Activated CD8-positive, alpha-beta memory T cell treated with anti-CD3 and anti-CD28 coated beads, Interleukin-2, amount 10 ng/mL, durations not matched to agents 7 days and 5 days (primary cell): ENCODE measurements at regions of chr2 and their contacts with region 1.

Region 1: DNA sequence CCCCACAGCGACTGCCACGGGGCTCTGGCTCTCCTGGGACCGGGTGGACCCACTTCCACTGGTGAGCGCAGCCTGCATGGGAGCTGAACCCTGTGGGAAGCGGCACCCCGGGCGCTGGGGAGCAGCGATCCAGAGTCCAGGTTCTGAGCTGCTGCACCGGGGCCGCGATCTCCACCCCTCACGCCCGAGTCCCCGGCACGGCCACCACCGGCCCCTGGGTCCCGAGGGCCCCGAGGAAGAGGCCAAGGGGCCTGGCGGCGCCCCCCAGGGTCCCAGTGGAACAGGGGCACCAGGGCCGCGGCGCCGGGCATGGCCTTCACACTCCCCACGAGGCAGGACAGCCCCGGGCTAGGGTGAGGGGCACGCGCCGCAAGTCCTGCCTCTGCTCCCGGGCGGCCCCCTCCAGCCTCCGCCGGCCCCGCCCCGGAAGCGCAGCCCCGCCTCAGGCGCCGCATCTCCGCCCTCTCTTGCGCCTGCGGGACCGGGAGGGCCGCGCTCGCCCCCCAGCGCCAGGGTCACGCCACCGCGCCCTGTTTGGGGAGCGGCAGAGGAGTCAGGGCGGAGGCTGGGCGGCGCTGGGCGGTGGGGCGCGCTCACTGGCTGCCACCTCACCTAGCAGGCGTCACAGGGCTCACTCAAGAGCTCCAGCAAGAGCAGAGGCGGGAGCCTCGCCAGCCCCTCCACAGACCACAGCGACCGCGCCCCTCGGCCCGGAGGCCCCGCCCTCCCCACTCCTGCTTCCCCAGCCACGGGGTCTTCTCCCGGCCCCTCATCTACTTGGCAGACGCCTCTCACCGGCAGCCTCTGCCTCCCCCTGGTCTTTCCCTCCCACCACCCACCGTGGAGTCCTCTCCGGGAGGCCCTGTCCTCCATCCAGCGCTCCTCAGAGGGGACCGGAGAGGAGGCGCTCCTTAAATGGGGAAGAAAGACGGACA is 26.8 kb downstream of the THAP4 start:
- DNase-seq: peak; percentile 94
- ATAC-seq: peak; percentile 99
- H3K4me3 Mint-ChIP-seq: peak overlapping the region; percentile 45
- H3K27ac Mint-ChIP-seq: peak overlapping the region; percentile 69
- H3K4me1 Mint-ChIP-seq: peaks cover 24% of the 10 kb centered on the region
- H3K27me3 Mint-ChIP-seq: no peaks in the 10 kb centered on the region

Region 2: DNA sequence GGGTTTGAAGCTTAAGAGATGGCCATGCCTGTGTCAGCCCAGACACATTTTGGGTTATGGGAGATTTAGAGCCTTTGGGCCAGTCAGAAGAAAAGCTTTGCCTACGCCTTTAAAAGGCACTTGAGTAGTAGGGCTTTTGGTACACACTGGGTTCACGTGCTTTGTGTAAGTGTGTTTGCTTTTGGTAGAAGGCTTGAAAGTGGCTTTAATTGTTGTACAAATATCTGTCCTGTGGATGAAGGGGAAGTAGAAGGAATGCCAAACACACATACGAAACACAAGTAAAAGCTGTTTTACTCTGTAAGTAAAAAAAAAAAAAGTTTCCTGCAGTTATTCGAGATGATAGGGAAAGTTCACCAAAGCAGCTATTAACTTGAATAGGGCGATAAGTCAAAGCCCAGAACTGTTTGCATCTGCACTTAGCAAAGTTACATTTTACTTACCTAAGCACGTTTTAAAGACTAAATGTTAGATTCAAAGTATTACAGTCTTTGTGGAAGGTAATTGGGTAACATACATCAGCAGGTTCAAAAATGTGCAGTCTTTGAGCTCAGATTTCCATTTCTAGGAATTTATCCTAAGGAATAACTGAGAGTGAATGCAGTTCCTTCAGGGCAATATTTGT is 177.2 kb before region 1 on chr2:
- CTCF ChIA-PET with region 1: no interaction called
- DNase-seq: no peak
- ATAC-seq: no peak
- H3K4me3 Mint-ChIP-seq: no peak overlapping the region
- H3K27ac Mint-ChIP-seq: no peak overlapping the region
- H3K4me1 Mint-ChIP-seq: no peaks in the 10 kb centered on the region
- H3K27me3 Mint-ChIP-seq: no peaks in the 10 kb centered on the region

Region 3: DNA sequence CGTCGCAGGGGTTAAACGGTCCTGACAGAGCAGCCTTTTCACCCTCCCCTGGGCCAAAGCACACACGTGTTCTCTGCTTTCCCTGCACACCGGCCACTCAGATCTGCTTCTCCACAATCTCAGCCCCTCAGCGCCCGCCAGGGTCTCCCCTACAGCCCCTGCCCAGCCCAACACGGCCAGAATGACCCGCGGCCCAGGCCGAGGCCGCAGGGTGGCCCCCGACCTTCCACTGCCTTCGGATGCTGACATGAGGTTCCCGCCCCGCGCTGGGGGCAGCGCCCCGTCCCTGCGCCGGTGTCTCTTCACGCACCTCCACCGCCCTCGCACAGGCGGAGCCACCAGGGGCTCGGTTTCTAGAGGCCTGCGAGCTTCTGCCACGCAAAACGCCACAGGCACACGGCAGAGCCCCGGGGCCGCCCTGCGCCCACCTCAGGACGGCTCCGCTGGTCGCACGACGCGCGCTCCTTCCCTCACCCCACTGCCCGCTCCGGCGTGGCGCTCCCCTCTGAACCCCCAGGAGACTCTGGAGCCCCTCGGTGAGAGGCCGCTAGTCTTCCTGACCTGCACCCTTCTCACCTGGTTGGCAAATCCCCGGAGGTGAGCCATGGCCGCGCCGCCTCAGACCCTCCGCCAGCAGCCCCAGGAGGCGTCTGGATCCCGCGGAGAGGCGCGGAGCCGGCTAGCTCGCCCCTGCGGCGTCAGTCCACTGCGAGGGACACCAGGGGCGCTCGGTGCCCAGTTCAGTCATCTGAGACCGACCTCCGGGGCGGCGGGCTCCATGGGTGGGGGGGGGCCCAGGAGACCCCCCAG is 102.5 kb before region 1 on chr2:
- CTCF ChIA-PET with region 1: no interaction called
- DNase-seq: peak; percentile 60
- ATAC-seq: peak; percentile 26
- H3K4me3 Mint-ChIP-seq: peak overlapping the region; percentile 78
- H3K27ac Mint-ChIP-seq: peak overlapping the region; percentile 52
- H3K4me1 Mint-ChIP-seq: peaks cover 18% of the 10 kb centered on the region
- H3K27me3 Mint-ChIP-seq: peaks cover 10% of the 10 kb centered on the region

Region 4: DNA sequence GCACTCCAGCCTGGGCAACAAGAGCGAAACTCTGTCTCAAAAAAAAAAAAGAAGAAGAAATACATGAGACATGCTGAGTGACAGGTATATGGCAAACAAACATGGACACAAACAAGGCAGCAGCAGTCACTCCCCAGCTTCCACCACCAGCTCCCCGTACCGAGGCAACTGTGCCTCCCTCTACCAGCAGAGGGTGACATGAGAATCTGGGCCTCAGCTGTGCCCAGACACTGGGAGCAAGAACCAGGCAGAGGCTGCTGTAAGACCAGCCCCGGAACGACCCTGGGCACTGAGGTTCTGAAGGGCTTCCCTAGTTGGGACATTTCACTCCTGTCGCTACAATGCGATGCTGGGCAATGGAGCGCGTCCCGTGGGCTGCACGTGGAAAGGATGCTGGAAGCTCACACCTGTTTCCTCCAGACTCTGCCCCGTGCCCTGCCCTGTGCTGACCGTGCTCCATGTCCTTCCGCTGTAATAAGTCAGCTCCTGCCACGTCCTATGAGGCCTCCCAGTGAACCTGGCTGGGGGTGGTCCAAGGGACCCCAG is 14.5 kb before region 1 on chr2:
- CTCF ChIA-PET with region 1: interaction called, 10 read pairs
- DNase-seq: no peak
- ATAC-seq: no peak
- H3K4me3 Mint-ChIP-seq: no peak overlapping the region
- H3K27ac Mint-ChIP-seq: no peak overlapping the region
- H3K4me1 Mint-ChIP-seq: no peaks in the 10 kb centered on the region
- H3K27me3 Mint-ChIP-seq: no peaks in the 10 kb centered on the region

Region 5: DNA sequence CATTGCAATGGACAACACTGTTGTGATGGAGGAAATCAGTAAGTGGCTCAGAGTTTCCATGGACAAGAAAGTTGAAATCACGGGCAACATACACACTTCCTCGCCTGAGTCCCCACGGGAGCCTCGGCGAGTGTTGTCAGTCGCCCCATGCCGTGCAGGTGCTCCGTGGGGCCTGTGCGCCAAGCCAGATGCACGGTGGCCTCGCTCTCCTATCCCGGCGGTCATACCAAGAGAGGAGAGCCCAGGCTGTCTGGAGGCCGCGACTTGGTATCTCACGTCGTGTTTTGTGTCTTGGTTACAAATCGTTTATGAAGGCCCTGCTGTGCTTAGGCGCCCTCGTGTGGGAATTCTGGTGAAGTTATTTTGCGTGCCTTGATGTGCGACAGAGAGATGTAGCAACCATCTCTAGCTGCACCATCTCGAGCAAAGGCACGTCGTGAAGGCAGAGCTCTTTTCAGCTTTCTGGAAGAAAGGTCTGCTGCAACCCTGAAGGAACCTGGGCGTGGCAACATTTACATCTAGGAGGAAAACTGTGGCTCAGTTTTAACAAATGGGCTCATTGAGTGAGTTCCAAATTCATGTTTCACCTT is 49.1 kb after region 1 on chr2:
- CTCF ChIA-PET with region 1: no interaction called
- DNase-seq: peak; percentile 59
- ATAC-seq: peak; percentile 36
- H3K4me3 Mint-ChIP-seq: no peak overlapping the region
- H3K27ac Mint-ChIP-seq: no peak overlapping the region
- H3K4me1 Mint-ChIP-seq: no peaks in the 10 kb centered on the region
- H3K27me3 Mint-ChIP-seq: no peaks in the 10 kb centered on the region